ENCODE measurements at regions of chr3 and their contacts with region 1.

Region 1: DNA sequence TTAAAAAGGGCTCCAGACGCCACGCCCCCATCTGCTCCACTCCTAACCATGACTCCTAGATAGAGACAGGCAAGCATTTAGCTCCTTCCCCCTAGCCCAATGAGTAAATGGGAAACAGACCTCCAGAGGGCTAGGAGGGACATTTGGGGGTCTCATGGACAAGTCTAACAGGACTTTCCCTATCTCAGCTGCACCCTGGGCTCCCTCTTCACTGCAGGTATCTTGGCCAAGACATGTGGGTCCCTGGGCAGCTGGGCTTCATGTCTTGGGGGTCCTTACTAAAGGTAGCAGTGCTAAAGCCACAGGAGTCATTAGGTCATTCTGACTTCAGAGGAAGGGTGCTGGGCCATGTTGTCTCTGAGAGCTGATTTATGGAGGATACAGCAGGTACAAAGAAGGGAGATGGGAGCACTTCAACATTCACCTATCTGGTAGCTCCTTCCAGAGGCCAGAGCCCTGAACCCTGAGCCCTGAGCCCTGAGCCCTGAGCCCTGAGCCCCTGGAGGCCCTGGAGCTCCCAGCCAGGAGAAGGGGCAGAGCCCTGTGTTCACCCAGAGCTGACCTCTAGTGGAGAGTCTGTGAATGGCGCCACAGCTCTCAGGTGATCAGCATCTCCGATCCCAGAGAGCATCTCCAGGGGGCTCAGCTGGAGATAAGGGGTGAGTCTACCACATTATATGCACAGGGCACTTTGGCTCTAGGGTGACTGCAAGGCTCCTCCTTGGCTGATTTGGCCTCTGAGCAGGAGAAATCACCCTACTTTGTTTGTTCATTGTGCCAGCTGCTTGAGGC is 40.1 kb upstream of the EPHB1 start:
- DNase-seq: peak; percentile 19 to 22
- ATAC-seq: peak; percentile 83 to 97; a peak in 5 of 6 replicates
- H3K4me3 ChIP-seq: no peak overlapping the region
- H3K27ac ChIP-seq: no peak overlapping the region
- H3K4me1 ChIP-seq: no peaks in the 10 kb centered on the region
- CTCF ChIP-seq: peak; percentile 28
- EP300 ChIP-seq: no peak
- POLR2A ChIP-seq: no peak
- RAD21 ChIP-seq: peak in 1 of 2 experiments; percentile 29; a peak in 2 of 5 replicates

Region 2: DNA sequence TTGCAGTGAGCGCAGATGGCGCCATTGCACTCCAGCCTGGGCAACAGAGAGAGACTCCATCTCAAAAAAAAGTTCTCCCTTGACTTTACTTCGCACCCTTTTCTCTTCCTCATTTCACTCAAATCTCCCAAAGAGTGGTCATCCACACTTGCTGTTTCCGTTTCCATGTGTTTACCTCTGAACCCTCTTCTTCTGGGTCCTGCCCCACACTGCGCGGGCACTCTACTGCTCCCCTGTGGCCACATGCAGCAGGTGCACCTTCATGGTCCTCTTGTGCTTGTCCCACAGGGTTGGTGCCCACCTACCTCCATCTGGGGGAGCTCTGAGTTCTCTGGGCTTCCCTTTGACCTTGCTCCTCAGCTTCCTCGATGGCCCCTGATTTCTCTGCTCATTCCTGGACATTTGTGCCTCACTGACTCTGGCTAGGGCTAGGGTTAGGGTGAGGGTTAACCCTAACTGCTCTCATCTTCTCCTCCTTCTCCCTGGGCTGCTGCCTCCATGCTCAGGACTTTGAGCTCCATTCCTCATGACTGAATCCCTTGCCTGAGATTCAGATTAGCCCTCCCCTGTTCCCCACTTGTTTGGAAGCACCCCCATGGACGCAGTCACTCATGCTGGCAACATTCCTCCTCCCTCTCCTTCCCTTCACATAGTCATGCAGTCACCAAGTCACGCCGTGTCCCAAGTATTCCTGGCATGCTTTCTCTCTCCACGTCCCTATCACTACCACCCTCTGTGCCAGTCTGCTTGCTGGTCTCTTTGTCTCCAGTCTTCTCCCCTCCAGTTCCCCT is 77.6 kb before region 1 on chr3:
- CTCF ChIA-PET with region 1: no interaction called
- POLR2A ChIA-PET with region 1: no interaction called
- DNase-seq: peak; percentile 14 to 19
- ATAC-seq: peak; percentile 73 to 79
- H3K4me3 ChIP-seq: no peak overlapping the region
- H3K27ac ChIP-seq: no peak overlapping the region
- H3K4me1 ChIP-seq: no peaks in the 10 kb centered on the region
- CTCF ChIP-seq: no peak; the same call in 2 of the 3 replicates
- EP300 ChIP-seq: no peak
- POLR2A ChIP-seq: no peak
- RAD21 ChIP-seq: 0 out of 5 replicates have a peak, but pooled peaks of 1 of the 2 experiments have one; percentile 16

Region 3: GRCh38 chr3:134769287-134769868 is 14.4 kb after region 1 on chr3:
- CTCF ChIA-PET with region 1: interaction called, 17 read pairs
- POLR2A ChIA-PET with region 1: no interaction called
- DNase-seq: no peak
- ATAC-seq: no peak
- H3K4me3 ChIP-seq: no peak overlapping the region
- H3K27ac ChIP-seq: no peak overlapping the region
- H3K4me1 ChIP-seq: no peaks in the 10 kb centered on the region
- CTCF ChIP-seq: no peak
- EP300 ChIP-seq: no peak
- POLR2A ChIP-seq: no peak
- RAD21 ChIP-seq: no peak

Region 4: DNA sequence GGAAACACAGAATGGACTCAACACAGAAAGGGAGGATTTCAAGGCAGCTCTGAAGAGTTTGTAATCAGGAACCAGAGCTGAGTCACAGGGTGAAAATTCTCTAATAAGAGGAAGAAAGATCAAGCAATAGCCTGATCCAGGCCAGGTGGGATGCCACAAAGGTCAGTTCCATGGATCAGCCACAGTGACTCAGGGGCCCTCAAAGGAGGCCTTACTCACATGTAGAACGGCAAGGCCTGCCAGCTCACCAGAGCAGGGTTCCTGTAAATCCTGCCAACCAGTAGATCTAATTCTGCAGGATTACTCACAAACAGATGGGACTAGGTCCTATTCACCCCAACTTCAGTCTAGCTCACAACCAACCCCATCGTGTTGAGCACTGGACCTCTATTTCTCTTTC is 1132.3 kb after region 1 on chr3:
- CTCF ChIA-PET with region 1: no interaction called
- POLR2A ChIA-PET with region 1: no interaction called
- DNase-seq: no peak
- ATAC-seq: no peak
- H3K4me3 ChIP-seq: no peak overlapping the region
- H3K27ac ChIP-seq: no peak overlapping the region
- H3K4me1 ChIP-seq: no peaks in the 10 kb centered on the region
- CTCF ChIP-seq: no peak
- EP300 ChIP-seq: no peak
- POLR2A ChIP-seq: no peak
- RAD21 ChIP-seq: no peak

Measured in A549 (cell line).